ENCODE measurements at regions of chr2 and their contacts with region 1.

Region 1: DNA sequence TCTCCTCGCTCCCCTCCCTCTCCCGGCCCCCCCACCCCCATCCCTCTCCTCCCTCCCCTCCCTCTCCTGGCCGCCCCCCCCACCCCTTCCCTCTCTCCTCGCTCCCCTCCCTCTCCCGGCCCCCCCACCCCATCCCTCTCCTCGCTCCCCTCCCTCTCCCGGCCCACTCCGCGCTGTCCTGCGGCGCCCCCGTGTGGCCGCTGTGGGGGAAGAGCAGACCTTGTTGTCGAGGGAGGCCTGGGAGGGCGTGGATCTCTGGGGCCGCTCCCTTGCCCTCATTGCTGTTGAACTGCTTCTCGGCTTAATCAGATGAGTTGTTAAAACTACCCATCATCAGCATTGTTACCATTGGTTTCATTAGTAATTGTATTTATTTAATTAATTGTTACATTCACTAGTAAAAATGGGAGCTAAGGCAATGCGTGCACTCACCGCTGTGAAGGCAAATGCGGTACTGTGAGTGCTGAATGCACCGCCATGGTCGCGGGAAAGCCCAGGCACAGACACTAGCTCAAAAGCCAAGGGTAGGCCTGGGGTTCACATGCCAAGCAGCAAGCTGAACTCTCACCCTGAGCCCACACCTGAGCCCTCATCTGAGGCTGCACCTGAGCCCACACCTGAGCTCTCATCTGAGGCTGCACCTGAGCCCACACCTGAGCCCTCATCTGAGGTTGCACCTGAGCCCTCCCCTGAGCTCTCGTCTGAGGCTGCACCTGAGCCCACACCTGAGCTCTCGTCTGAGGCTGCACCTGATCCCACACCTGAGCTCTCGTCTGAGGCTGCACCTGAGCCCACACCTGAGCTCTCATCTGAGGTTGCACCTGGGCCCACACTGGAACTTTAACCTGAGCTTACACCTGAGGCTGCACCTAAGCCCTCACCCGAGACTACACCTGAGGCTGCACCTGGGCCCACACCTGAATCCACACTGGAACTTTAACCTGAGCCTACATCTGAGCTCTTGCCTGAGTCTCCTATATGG is 8.8 kb downstream of the RTP5 start:
- DNase-seq: peak; percentile 69
- H3K4me3 ChIP-seq: no peak overlapping the region
- H3K27ac ChIP-seq: no peak overlapping the region
- H3K4me1 ChIP-seq: no peaks in the 10 kb centered on the region
- H3K27me3 ChIP-seq: no peaks in the 10 kb centered on the region
- CTCF ChIP-seq: peak; percentile 44 to 71 (median 64)
- POLR2A ChIP-seq: no peak

Region 2: GRCh38 chr2:241702132-241703031 is 175.9 kb before region 1 on chr2:
- intact Hi-C with region 1: loop called (anchors 5 kb)
- DNase-seq: peak; percentile 85
- H3K4me3 ChIP-seq: peak overlapping the region; percentile 92 to 96
- H3K27ac ChIP-seq: peak overlapping the region; percentile 89 to 90
- H3K4me1 ChIP-seq: peaks cover 7% of the 10 kb centered on the region
- H3K27me3 ChIP-seq: no peaks in the 10 kb centered on the region
- CTCF ChIP-seq: peak in 3 of 4 experiments; percentile 16 to 58 (median 49)
- POLR2A ChIP-seq: no peak

Region 3: GRCh38 chr2:241734467-241735208 is 143.6 kb before region 1 on chr2 and contains the start of gene D2HGDH:
- intact Hi-C with region 1: loop called (anchors 5 kb)
- DNase-seq: peak; percentile 92
- H3K4me3 ChIP-seq: peak within 1 kb of the TSS; percentile 79 to 93
- H3K27ac ChIP-seq: peak within 1 kb of the TSS; percentile 82 to 90
- H3K4me1 ChIP-seq: no peaks in the 10 kb centered on the region
- H3K27me3 ChIP-seq: no peaks in the 10 kb centered on the region
- CTCF ChIP-seq: peak in 1 of 4 experiments; percentile 3
- POLR2A ChIP-seq: peak; percentile 77
- total RNA-seq, gene D2HGDH: 38.7 to 55.3 TPM

Region 4: GRCh38 chr2:241914542-241914941 is 36.3 kb after region 1 on chr2:
- intact Hi-C with region 1: no loop called
- DNase-seq: no peak
- H3K4me3 ChIP-seq: no peak overlapping the region
- H3K27ac ChIP-seq: no peak overlapping the region
- H3K4me1 ChIP-seq: no peaks in the 10 kb centered on the region
- H3K27me3 ChIP-seq: no peaks in the 10 kb centered on the region
- CTCF ChIP-seq: no peak
- POLR2A ChIP-seq: no peak

Region 5: GRCh38 chr2:241933179-241933911 is 55.1 kb after region 1 on chr2:
- intact Hi-C with region 1: loop called (anchors 10 kb)
- DNase-seq: peak; percentile 39
- H3K4me3 ChIP-seq: no peak overlapping the region
- H3K27ac ChIP-seq: peak overlapping the region; percentile 77 to 79
- H3K4me1 ChIP-seq: peaks cover 3% of the 10 kb centered on the region
- H3K27me3 ChIP-seq: no peaks in the 10 kb centered on the region
- CTCF ChIP-seq: no peak
- POLR2A ChIP-seq: no peak